K562 (cell line): ENCODE measurements at regions of chr18 and their contacts with region 1.

Region 1: GRCh38 chr18:46173393-46174341 is 69.5 kb downstream of the HAUS1 start:
- DNase-seq: peak; percentile 73 to 93 (median 82)
- ATAC-seq: peak; percentile 92
- H3K4me3 ChIP-seq: peak overlapping the region; percentile 95
- H3K27ac ChIP-seq: peak overlapping the region; percentile 80
- H3K4me1 ChIP-seq: peaks cover 14 to 32% of the 10 kb centered on the region in 2 experiments; a peak in 4 of 5 replicates
- H3K27me3 ChIP-seq: no peaks in the 10 kb centered on the region
- CTCF ChIP-seq: peak; percentile 68 to 87 (median 84)
- EP300 ChIP-seq: peak; percentile 22; the same call in 1 of the 2 replicates
- POLR2A ChIP-seq: peak; percentile 76
- RAD21 ChIP-seq: peak; percentile 50 to 64

Region 2: GRCh38 chr18:46097801-46098615 is 75.7 kb before region 1 on chr18 and contains the start of gene ATP5F1A:
- CTCF ChIA-PET with region 1: no interaction called
- POLR2A ChIA-PET with region 1: no interaction called
- in situ Hi-C with region 1: no loop called
- intact Hi-C with region 1: loop called (anchors 2 kb)
- DNase-seq: peak; percentile 68 to 82 (median 76)
- ATAC-seq: peak; percentile 89
- H3K4me3 ChIP-seq: peak within 1 kb of the TSS; percentile 94
- H3K27ac ChIP-seq: peak within 1 kb of the TSS; percentile 99
- H3K4me1 ChIP-seq: peaks cover 3 to 6% of the 10 kb centered on the region in 2 experiments; a peak in 2 of 5 replicates
- H3K27me3 ChIP-seq: no peaks in the 10 kb centered on the region
- CTCF ChIP-seq: no peak
- EP300 ChIP-seq: no peak
- POLR2A ChIP-seq: peak; percentile 86
- RAD21 ChIP-seq: no peak
- polyA plus RNA-seq, gene ATP5F1A: 690 to 762 TPM

Region 3: GRCh38 chr18:46161703-46162396 is 11.8 kb before region 1 on chr18:
- CTCF ChIA-PET with region 1: no interaction called
- POLR2A ChIA-PET with region 1: interaction called, 13 read pairs
- in situ Hi-C with region 1: no loop called
- intact Hi-C with region 1: no loop called
- DNase-seq: no peak
- ATAC-seq: peak; percentile 10; the same call in 1 of the 3 replicates
- H3K4me3 ChIP-seq: no peak overlapping the region
- H3K27ac ChIP-seq: no peak overlapping the region
- H3K4me1 ChIP-seq: peaks cover 16 to 34% of the 10 kb centered on the region in 2 experiments; a peak in 4 of 5 replicates
- H3K27me3 ChIP-seq: no peaks in the 10 kb centered on the region
- CTCF ChIP-seq: no peak
- EP300 ChIP-seq: no peak
- POLR2A ChIP-seq: no peak
- RAD21 ChIP-seq: no peak

Region 4: DNA sequence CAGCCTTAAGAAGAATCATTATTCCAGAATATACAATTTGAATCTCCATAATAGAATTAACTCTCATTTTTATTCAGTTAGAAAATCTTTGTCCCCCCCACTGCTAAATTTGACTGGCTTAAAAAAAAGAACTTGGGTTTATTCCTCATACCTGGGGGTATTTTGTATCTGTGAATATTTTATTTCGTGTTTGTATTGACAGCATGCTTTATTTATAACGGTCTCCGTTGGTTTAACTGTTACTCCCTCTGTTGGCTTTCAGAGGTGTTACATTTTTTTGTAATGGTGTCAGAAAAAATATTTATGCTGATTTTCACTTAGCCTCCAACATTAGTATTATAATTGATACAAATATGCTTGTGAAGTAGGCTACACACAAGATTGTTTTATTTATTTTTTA is 39.6 kb after region 1 on chr18:
- CTCF ChIA-PET with region 1: interaction called, 4 read pairs
- POLR2A ChIA-PET with region 1: no interaction called
- in situ Hi-C with region 1: no loop called
- intact Hi-C with region 1: loop called (anchors 1 kb)
- DNase-seq: peak in 3 of 4 experiments; percentile 9 to 20 (median 13)
- ATAC-seq: no peak
- H3K4me3 ChIP-seq: no peak overlapping the region
- H3K27ac ChIP-seq: no peak overlapping the region
- H3K4me1 ChIP-seq: peaks cover 0 to 3% of the 10 kb centered on the region in 2 experiments; a peak in 3 of 5 replicates
- H3K27me3 ChIP-seq: no peaks in the 10 kb centered on the region
- CTCF ChIP-seq: peak; percentile 23 to 58 (median 25); a peak in 3 of 6 replicates
- EP300 ChIP-seq: no peak
- POLR2A ChIP-seq: no peak
- RAD21 ChIP-seq: peak; percentile 24 to 48

Region 5: DNA sequence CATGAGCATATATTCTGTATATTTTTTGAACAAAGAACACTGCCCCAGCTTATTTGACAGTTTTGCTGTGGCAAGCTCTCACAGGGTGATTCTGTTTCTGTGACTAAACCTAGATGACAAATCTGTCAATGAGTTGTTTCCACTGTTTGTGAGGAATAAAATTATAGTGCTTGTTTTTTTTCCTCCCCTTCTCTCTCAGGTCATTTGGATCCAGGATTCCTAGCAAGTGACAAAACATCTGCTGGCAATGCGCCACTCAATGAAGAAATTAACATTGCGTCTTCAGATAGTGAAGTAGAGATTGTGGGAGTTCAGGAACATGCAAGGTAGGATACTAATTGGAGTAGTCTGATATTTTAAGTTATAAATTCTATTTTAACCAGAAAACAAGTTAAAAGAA is 79.8 kb after region 1 on chr18:
- CTCF ChIA-PET with region 1: no interaction called
- POLR2A ChIA-PET with region 1: no interaction called
- in situ Hi-C with region 1: no loop called
- intact Hi-C with region 1: no loop called
- DNase-seq: no peak
- ATAC-seq: no peak
- H3K4me3 ChIP-seq: no peak overlapping the region
- H3K27ac ChIP-seq: no peak overlapping the region
- H3K4me1 ChIP-seq: peaks cover 4 to 6% of the 10 kb centered on the region in 2 experiments; a peak in 3 of 5 replicates
- H3K27me3 ChIP-seq: no peaks in the 10 kb centered on the region
- CTCF ChIP-seq: no peak
- EP300 ChIP-seq: no peak
- POLR2A ChIP-seq: no peak
- RAD21 ChIP-seq: no peak

Region 6: GRCh38 chr18:46281185-46282176 is 107.8 kb after region 1 on chr18:
- CTCF ChIA-PET with region 1: no interaction called
- POLR2A ChIA-PET with region 1: no interaction called
- in situ Hi-C with region 1: no loop called
- intact Hi-C with region 1: loop called (anchors 5 kb)
- DNase-seq: peak; percentile 48 to 68 (median 62)
- ATAC-seq: peak; percentile 90
- H3K4me3 ChIP-seq: no peak overlapping the region
- H3K27ac ChIP-seq: no peak overlapping the region
- H3K4me1 ChIP-seq: peaks cover 0 to 9% of the 10 kb centered on the region in 2 experiments; a peak in 1 of 5 replicates
- H3K27me3 ChIP-seq: peaks cover 5 to 10% of the 10 kb centered on the region in 2 experiments; a peak in 3 of 5 replicates
- CTCF ChIP-seq: peak; percentile 71 to 78 (median 73)
- EP300 ChIP-seq: no peak
- POLR2A ChIP-seq: no peak
- RAD21 ChIP-seq: peak; percentile 62 to 77; a peak in 3 of 4 replicates

Region 7: DNA sequence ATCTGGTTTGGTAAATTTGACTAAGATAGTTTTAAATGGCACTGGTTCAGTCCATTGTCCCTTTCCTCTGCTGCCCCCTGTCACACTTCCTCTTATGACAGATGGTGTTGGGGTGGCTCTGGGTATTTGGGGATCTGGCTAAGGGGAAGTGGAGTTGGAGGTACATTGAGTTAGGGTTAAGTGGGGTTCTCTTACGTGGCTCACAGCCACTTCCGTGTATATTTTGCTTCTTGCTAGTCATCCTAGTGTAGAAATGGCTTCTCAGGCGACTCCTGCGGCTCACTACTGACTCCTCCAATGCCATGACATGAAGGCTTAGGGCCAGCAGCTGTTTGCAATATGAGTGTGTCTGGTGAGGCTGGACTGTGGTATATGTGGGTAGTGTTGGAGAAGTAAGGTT is 117.5 kb after region 1 on chr18:
- CTCF ChIA-PET with region 1: no interaction called
- POLR2A ChIA-PET with region 1: no interaction called
- in situ Hi-C with region 1: no loop called
- intact Hi-C with region 1: loop called (anchors 5 kb)
- DNase-seq: no peak
- ATAC-seq: peak; percentile 60
- H3K4me3 ChIP-seq: no peak overlapping the region
- H3K27ac ChIP-seq: no peak overlapping the region
- H3K4me1 ChIP-seq: no peaks in the 10 kb centered on the region; a peak in 2 of 5 replicates
- H3K27me3 ChIP-seq: peaks cover 3 to 21% of the 10 kb centered on the region in 2 experiments; a peak in 3 of 5 replicates
- CTCF ChIP-seq: peak; percentile 19 to 42 (median 29); a peak in 3 of 6 replicates
- EP300 ChIP-seq: no peak
- POLR2A ChIP-seq: no peak
- RAD21 ChIP-seq: no peak